ENCODE measurements at regions of chr1 and their contacts with region 1.

Region 1: DNA sequence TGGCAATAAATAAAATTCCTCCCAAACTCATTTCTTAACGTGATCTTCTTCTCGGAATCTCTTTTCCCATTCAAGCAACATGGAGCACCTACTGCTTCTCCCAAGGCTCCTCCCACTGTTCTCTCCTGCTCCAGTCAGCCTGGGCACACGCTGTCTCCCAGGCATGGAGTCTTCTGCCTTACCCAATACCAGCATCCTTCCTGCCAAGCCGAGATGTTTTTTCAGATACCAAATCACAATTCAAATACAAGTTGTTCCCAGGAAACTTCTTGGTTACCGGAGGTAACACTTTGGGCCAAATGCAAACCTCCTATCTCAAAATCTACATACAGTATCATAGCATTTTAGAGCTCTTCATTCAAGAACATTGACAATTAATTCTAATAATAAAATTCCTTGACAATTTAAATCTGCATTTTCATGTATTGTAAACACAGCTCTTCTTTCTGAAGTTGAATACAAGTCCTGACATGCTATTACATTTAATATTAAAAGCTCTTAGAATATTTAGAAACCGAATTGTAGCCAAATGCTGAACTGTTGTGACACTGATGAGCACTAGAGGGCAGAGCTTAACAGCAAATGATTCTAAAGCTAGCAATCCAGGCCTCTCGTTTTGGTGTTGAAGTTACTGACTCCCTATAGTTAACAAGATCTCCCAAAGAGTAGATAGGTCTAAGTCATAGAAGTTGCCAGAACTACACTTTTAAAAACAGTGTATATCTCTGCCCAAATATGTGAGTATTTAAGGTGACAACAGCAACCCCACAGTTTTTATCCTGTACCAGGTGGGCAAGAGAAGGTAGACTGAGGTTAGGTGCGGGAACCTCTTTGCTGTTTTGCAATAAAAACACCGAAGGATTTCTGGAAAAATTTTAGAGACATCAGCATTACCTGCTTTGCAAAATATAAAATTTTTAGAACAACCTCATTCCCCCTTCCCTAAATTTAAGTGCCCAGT is 52.3 kb downstream of the BCAR3 start:
- DNase-seq: peak; percentile 83
- H3K4me3 ChIP-seq: no peak overlapping the region
- H3K27ac ChIP-seq: no peak overlapping the region
- H3K4me1 ChIP-seq: peaks cover 5% of the 10 kb centered on the region
- CTCF ChIP-seq: peak; percentile 99

Region 2: GRCh38 chr1:93437976-93438605 is 191.3 kb before region 1 on chr1:
- CTCF ChIA-PET with region 1: no interaction called
- POLR2A ChIA-PET with region 1: no interaction called
- intact Hi-C with region 1: loop called (anchors 5 kb)
- DNase-seq: peak; percentile 53
- H3K4me3 ChIP-seq: no peak overlapping the region
- H3K27ac ChIP-seq: no peak overlapping the region
- H3K4me1 ChIP-seq: no peaks in the 10 kb centered on the region
- CTCF ChIP-seq: peak; percentile 89

Region 3: DNA sequence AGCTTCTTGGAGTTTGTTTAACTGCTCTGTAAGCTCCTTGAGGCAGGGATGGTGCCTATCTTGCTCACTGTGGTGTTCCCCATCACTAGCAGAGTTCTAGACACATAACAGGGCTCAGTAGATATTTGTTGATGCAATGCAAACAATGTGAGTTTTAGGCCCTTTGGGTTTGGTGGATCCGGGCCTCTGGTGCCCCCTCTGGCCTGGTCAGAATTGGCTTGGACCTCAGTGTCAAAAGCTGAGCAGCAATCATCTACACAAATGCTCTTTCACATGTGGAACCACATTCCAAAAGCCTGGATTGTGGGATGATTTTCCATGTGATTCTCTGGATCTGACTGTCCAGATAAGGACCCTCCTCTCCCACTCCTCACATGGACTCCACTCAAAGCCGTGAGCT is 105.6 kb after region 1 on chr1:
- CTCF ChIA-PET with region 1: interaction called, 3 read pairs
- POLR2A ChIA-PET with region 1: interaction called, 4 read pairs
- intact Hi-C with region 1: loop called (anchors 1 kb)
- DNase-seq: peak; percentile 45
- H3K4me3 ChIP-seq: no peak overlapping the region
- H3K27ac ChIP-seq: no peak overlapping the region
- H3K4me1 ChIP-seq: peaks cover 34% of the 10 kb centered on the region
- CTCF ChIP-seq: peak; percentile 76

Region 4: DNA sequence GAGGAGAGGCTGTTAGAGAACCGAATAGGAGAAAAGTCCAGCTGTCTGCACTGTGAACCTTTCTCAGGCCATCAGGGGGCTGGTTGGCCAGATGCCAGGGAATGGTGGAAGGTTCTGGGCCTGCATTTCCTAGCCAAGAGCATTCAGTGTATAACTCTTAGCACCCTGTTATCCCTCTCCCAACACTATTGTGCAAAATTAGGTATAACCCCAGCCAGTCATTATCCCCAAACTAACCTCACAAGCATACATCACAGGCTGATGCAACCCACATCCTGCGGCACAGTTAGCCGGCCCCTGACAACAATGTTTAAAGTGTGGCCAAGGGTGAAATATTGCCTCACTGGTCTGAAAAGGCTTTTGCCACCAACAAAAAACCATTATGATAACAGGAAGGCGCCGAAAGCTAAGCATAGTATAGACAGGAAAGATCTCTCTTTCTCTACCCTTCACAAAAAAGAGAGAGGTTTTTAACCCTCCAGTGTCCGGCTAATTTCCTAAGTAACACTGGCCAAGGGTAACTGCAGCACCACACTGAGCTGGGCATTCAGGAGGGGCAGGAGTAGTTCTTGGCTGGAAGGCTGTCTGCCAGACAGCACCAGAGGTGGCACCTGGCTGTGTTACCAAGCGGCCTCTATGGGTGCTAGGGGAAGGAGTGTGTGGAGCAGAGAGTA is 129.6 kb after region 1 on chr1:
- CTCF ChIA-PET with region 1: no interaction called
- POLR2A ChIA-PET with region 1: no interaction called
- intact Hi-C with region 1: no loop called
- DNase-seq: no peak
- H3K4me3 ChIP-seq: no peak overlapping the region
- H3K27ac ChIP-seq: no peak overlapping the region
- H3K4me1 ChIP-seq: no peaks in the 10 kb centered on the region
- CTCF ChIP-seq: no peak

Region 5: DNA sequence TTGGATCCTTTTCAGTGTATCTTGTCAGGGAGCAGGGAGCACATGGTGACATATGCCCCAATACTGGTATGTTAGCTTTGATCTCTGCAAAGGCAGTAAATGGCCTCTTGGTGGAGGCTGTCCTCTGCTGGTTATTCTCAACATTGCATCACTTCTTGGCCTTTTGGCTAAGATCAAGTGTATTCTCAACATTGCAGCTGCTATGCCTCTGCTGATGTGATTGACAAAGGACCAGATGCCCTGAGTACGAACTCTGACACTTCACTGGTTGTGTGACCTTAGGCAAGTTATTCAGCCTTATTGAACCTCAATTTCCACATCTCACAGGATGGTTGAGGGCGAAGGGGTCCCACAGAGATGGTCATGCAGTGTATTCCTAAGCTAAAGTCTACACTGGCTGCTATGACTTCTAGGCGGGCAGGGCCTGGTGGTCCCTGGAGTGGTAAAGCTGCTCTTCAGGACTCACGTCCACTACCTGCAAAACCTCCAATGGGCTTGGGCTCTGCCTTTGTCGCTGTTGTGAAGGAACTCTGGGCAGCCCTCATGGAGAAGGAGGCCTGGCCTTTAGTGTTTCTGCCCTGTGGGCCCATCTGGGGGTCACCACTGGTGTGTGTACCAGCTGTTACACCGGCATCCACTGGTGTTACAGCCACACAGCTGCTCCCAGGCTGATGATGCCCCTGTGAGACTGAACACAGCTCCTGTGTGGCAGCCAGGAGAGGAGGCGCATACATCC is 184.8 kb after region 1 on chr1:
- CTCF ChIA-PET with region 1: interaction called, 45 read pairs
- POLR2A ChIA-PET with region 1: interaction called, 15 read pairs
- intact Hi-C with region 1: loop called (anchors 1 kb)
- DNase-seq: peak; percentile 85
- H3K4me3 ChIP-seq: no peak overlapping the region
- H3K27ac ChIP-seq: no peak overlapping the region
- H3K4me1 ChIP-seq: peaks cover 33% of the 10 kb centered on the region
- CTCF ChIP-seq: peak; percentile 100

Region 6: DNA sequence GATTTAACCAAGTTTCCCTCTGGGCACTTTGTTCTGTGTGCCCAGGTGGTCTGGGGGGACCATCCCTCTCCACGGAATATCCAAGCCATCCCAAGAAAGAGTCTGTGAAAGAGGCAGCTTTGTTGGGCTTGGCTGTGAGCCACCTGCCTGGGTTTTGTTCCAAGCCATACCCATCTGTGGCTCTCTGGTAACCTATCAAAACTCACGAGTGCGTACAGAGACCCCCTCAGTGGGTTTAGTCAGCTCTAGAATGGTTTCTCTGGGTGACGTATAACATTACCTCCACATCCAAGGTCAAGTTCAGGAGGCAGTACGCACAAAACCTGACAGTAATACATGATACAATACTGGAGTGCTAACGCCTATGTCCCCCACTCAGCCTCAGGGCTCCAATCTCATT is 195.5 kb after region 1 on chr1:
- CTCF ChIA-PET with region 1: no interaction called
- POLR2A ChIA-PET with region 1: no interaction called
- intact Hi-C with region 1: no loop called
- DNase-seq: no peak
- H3K4me3 ChIP-seq: no peak overlapping the region
- H3K27ac ChIP-seq: no peak overlapping the region
- H3K4me1 ChIP-seq: no peaks in the 10 kb centered on the region
- CTCF ChIP-seq: no peak

Measured in OCI-LY7 (cell line).